Heart right ventricle (tissue), 16 donors: ENCODE measurements at regions of chr5 and their contacts with region 1.

Region 1: DNA sequence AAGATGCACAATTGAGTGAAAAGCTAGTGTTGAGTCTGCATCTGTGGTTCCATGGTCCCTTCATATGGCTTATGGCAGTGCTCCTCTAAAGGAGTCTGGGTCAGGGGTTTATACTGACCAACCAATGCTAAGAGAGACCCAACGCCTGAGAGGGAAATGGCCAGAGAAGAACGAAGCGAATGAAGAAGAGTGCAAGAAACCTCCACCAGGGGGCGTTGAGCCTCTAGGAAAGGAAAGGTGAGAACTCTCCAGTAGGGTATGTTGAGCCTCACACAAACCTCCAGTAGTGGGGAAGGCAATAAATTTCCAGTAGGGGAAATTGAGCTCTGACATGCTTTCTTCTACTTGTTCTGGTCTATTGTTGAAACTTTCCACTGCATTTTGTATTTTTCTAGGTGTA is 470.6 kb downstream of the PRDM9 start:
- DNase-seq: no peak
- ATAC-seq: no peak
- H3K4me3 ChIP-seq: no peak overlapping the region
- H3K27ac ChIP-seq: no peak overlapping the region
- H3K4me1 ChIP-seq: no peaks in the 10 kb centered on the region
- H3K27me3 ChIP-seq: no peaks in the 10 kb centered on the region
- CTCF ChIP-seq: peak in 3 of 9 donors; percentile 11 to 19 (median 15)

Region 2: GRCh38 chr5:22111320-22111719 is 1866.7 kb before region 1 on chr5:
- intact Hi-C with region 1: loop called in 1 of 10 experiments (anchors 5 kb)
- DNase-seq: no peak
- ATAC-seq: no peak
- H3K4me3 ChIP-seq: no peak overlapping the region
- H3K27ac ChIP-seq: no peak overlapping the region
- H3K4me1 ChIP-seq: no peaks in the 10 kb centered on the region
- H3K27me3 ChIP-seq: no peaks in the 10 kb centered on the region
- CTCF ChIP-seq: no peak

Region 3: GRCh38 chr5:23389291-23390101 is 588.5 kb before region 1 on chr5:
- intact Hi-C with region 1: no loop called
- DNase-seq: peak in 1 of 2 donors; percentile 47
- ATAC-seq: peak; percentile 81 to 99 (median 94)
- H3K4me3 ChIP-seq: no peak overlapping the region
- H3K27ac ChIP-seq: peak overlapping the region in 2 of 10 donors; percentile 6 to 20
- H3K4me1 ChIP-seq: peaks cover 0 to 18% (median 6%) of the 10 kb centered on the region in 9 donors
- H3K27me3 ChIP-seq: no peaks in the 10 kb centered on the region
- CTCF ChIP-seq: no peak

Region 4: DNA sequence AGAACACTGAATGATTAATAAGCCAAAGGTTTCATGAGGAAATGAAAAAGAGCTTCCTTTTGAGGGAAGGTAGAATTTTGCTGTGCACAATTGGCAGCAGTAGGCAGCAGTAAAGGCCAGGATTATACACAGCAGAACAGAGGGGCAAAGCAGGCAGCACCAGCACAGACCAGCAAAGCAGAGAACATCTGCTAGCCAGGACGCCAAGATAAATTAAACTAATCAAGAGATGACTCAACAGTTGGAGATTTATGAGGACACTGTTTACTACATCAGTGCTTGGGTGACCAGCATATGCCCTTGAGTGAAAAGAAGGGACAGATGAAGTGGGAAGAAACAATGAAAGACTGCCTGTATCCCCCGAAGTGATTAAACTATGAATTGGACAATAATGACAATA is 1538.1 kb after region 1 on chr5:
- intact Hi-C with region 1: loop called in 1 of 10 experiments (anchors 5 kb)
- DNase-seq: no peak
- ATAC-seq: no peak
- H3K4me3 ChIP-seq: no peak overlapping the region
- H3K27ac ChIP-seq: no peak overlapping the region
- H3K4me1 ChIP-seq: no peaks in the 10 kb centered on the region
- H3K27me3 ChIP-seq: no peaks in the 10 kb centered on the region
- CTCF ChIP-seq: no peak